Vagina (tissue), 2 donors: ENCODE measurements at regions of chr7 and their contacts with region 1.

Region 1: GRCh38 chr7:138151731-138152577 is 75.7 kb downstream of the AKR1D1 start:
- DNase-seq: no peak
- H3K4me3 ChIP-seq: no peak overlapping the region
- H3K27ac ChIP-seq: no peak overlapping the region
- H3K4me1 ChIP-seq: no peaks in the 10 kb centered on the region
- H3K27me3 ChIP-seq: no peaks in the 10 kb centered on the region
- CTCF ChIP-seq: no peak
- POLR2A ChIP-seq: no peak

Region 2: GRCh38 chr7:138127996-138128395 is 24.0 kb before region 1 on chr7:
- intact Hi-C with region 1: no loop called
- DNase-seq: no peak
- H3K4me3 ChIP-seq: no peak overlapping the region
- H3K27ac ChIP-seq: no peak overlapping the region
- H3K4me1 ChIP-seq: no peaks in the 10 kb centered on the region
- H3K27me3 ChIP-seq: no peaks in the 10 kb centered on the region
- CTCF ChIP-seq: no peak
- POLR2A ChIP-seq: no peak

Region 3: DNA sequence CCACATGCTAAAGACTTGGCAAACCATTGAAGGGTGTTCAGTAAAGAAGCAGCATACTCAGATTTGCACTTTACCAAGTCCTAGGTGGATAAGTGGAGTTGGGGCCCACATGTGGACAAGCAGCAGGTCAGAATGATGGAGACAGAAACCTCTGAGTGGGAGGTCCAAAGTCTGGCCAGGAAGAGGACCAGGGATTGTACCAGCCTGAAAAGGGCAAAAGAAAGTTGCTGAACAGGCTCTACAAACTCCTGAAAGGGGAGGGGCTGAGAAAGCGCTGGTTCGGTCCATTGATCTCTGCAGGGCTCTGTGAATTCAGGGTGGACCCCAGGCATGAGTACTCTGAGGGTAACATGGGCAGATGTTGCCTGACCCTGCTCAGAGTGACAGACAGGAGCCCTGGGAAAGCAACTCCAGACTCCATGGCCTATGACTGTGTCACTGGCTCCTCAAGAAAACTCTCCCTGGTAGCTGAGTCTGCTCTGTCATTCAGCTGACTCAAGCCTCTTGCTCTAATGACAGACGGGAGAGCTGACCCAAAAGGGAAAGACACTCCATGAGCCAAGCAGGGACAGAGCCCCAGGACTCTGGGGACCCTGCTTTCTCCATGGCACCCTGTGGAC is 1745.6 kb after region 1 on chr7:
- intact Hi-C with region 1: loop called (anchors 5 kb)
- DNase-seq: peak in 1 of 2 donors; percentile 88
- H3K4me3 ChIP-seq: no peak overlapping the region
- H3K27ac ChIP-seq: no peak overlapping the region
- H3K4me1 ChIP-seq: no peaks in the 10 kb centered on the region
- H3K27me3 ChIP-seq: no peaks in the 10 kb centered on the region
- CTCF ChIP-seq: no peak
- POLR2A ChIP-seq: no peak